Right ventricle myocardium superior (tissue), 1 donor: ENCODE measurements at regions of chr12 and their contacts with region 1.

Region 1: DNA sequence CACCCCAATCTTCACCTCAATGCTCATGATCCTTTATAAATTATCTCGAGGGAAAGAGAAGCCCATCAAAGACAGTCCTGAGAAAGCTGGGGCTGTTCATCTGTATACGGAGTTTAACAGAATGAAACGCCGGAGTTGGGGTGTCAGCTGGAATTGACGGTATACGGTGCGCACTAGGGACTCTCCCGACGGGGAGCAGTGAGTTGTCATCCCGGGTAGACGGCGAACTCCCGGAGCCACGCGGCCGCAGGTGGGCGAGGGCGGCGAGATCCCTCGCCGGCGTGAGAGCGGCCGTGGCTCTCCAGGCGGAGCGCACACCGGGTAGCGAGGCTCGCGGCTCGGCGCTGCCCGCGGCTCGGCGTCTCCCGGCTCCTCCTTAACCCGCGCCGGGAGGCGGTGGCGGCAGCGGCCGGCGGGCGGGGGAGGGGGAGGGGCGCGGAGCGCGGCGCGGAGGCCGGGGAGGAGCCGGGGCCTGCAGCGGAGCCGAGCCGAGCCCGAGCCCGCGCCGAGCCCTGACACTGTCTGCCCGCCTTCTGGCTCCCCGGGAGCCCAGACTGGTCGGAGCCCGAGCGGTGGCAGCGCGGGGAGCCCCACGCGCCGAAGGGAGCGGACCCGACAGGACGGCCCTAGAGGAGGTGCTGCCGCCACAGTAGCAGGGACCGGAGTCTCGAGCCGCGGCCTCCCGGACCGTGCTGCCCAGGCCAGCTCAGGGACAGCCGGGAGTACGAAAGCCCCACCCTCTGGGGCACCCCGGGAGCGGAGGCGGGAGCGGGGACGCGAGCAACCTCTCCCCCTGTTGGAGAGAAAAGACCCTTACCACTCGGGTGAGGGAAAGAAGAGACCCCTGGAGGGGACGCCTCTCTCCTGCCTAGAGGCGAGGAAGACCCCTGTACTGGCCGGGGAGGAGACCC is at the start of gene FOXJ2:
- DNase-seq: peak; percentile 88
- ATAC-seq: peak; percentile 93
- total RNA-seq, gene FOXJ2: 22.4 TPM

Region 2: GRCh38 chr12:7933255-7933729 is 99.2 kb before region 1 on chr12:
- intact Hi-C with region 1: loop called (anchors 10 kb)
- DNase-seq: peak; percentile 79
- ATAC-seq: peak; percentile 88

Region 3: GRCh38 chr12:7951671-7952070 is 80.8 kb before region 1 on chr12:
- intact Hi-C with region 1: no loop called
- DNase-seq: no peak
- ATAC-seq: no peak

Region 4: DNA sequence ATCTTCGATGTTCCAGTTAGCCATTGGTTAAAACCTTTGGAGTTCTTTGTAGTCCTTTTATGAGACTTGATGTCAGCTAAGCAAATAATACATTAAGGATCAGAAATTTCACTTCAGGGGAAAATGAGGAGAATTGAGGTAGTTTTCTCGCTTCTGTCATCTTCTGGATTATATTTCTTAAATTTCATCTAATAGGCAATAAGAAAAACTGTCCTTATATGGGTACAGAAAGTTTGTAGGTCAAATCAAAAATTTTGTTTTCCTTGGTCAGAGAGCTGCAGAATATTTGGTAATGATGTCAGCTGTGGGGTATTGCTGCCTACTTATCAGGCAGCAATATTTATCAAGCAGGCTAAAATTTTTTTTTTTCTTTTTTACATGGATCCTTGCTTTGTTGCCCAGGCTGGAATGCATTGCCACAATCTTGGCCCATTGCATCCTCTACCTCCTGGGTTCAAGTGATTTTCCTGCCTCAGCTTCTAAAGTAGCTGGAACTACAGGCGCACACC is 702.4 kb after region 1 on chr12:
- intact Hi-C with region 1: no loop called
- DNase-seq: no peak
- ATAC-seq: no peak